ENCODE measurements at regions of chr16 and their contacts with region 1.

Region 1: GRCh38 chr16:81873843-81874752 is 95.0 kb downstream of the PLCG2 start:
- DNase-seq: peak; percentile 81
- ATAC-seq: peak; percentile 90
- H3K4me3 Mint-ChIP-seq: no peak overlapping the region
- H3K27ac Mint-ChIP-seq: no peak overlapping the region
- H3K4me1 Mint-ChIP-seq: peaks cover 17% of the 10 kb centered on the region
- H3K27me3 Mint-ChIP-seq: peaks cover 4% of the 10 kb centered on the region

Region 2: GRCh38 chr16:81752225-81752875 is 121.7 kb before region 1 on chr16:
- CTCF ChIA-PET with region 1: interaction called, 15 read pairs
- POLR2A ChIA-PET with region 1: no interaction called
- DNase-seq: no peak
- ATAC-seq: peak; percentile 23
- H3K4me3 Mint-ChIP-seq: no peak overlapping the region
- H3K27ac Mint-ChIP-seq: peak overlapping the region; percentile 25
- H3K4me1 Mint-ChIP-seq: peaks cover 47% of the 10 kb centered on the region
- H3K27me3 Mint-ChIP-seq: peaks cover 4% of the 10 kb centered on the region

Region 3: GRCh38 chr16:81807767-81808358 is 66.2 kb before region 1 on chr16:
- CTCF ChIA-PET with region 1: no interaction called
- POLR2A ChIA-PET with region 1: no interaction called
- DNase-seq: no peak
- ATAC-seq: no peak
- H3K4me3 Mint-ChIP-seq: no peak overlapping the region
- H3K27ac Mint-ChIP-seq: no peak overlapping the region
- H3K4me1 Mint-ChIP-seq: peaks cover 43% of the 10 kb centered on the region
- H3K27me3 Mint-ChIP-seq: peaks cover 5% of the 10 kb centered on the region

Region 4: GRCh38 chr16:81834868-81835267 is 39.2 kb before region 1 on chr16:
- CTCF ChIA-PET with region 1: interaction called, 10 read pairs
- POLR2A ChIA-PET with region 1: no interaction called
- DNase-seq: no peak
- ATAC-seq: no peak
- H3K4me3 Mint-ChIP-seq: no peak overlapping the region
- H3K27ac Mint-ChIP-seq: no peak overlapping the region
- H3K4me1 Mint-ChIP-seq: peaks cover 55% of the 10 kb centered on the region
- H3K27me3 Mint-ChIP-seq: peaks cover 3% of the 10 kb centered on the region

Region 5: DNA sequence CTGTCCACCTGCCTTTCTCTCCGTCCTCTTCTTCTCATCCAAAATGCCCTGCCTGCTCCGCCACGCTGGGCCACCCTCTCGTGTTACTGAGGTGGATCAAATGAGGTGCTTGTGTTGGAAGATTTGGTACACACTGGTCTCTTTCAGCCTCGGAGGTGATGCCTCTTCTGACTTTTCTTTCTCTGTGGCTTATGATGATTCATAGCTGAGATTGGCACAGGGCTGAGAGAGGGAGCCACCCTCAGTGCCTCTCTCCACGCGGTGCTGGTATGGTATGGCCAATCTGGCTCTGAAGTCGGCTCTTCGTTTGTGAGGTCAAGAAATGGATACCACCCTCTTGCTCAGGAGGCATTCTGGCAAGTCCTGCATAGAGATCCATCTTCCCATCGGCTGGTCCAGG is 12.6 kb before region 1 on chr16:
- CTCF ChIA-PET with region 1: interaction called, 22 read pairs
- POLR2A ChIA-PET with region 1: no interaction called
- DNase-seq: no peak
- ATAC-seq: no peak
- H3K4me3 Mint-ChIP-seq: no peak overlapping the region
- H3K27ac Mint-ChIP-seq: no peak overlapping the region
- H3K4me1 Mint-ChIP-seq: peaks cover 11% of the 10 kb centered on the region
- H3K27me3 Mint-ChIP-seq: no peaks in the 10 kb centered on the region